ENCODE measurements at regions of chr12 and their contacts with region 1.

Region 1: DNA sequence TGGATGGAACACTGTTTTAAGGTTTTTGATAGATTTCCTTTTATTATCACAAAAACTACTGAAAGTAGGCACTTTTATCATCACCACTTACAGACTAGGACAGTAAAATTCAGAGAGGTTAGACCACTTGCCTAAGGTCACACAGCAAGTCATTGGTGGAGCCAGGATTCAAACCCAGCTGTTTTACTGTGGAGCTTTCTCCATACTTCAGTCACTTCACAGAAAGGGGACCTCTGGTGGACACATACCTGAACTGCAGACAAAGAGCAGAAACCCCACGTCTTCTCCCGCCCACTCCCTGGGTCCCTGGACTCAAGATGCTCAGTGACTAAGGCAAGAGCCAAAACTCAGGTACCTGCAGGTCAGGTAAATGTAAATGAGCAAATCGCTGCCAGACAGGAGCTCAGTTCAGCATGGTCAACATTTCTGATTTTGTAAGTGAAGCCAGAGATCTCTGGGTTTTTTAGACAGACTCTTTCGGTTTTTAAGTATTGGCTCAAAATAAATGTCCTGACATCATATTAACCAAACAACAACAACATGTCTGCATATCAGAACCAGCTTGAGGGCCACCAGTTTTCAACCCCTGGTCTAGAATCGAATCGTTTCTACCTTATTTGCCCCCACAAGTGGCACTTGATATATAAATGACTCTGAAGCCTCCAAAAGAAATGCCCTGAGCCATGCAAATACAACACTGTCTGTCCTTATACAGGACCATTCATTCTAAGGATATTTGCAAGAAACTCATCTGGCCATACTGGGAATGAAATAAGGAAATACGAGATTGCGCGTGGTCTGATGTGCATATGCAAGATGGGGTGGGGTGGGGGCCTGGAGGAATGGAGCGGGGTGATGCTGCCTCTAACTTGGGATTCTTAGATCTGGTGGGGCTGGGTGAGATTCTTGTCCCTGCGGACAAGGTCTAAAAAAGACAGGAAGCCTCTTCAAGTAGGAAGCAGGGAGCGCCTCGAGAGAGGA is 110.9 kb downstream of the KSR2 start:
- DNase-seq: peak; percentile 41
- H3K4me3 ChIP-seq: no peak overlapping the region
- H3K27ac ChIP-seq: no peak overlapping the region
- H3K4me1 ChIP-seq: no peaks in the 10 kb centered on the region
- H3K27me3 ChIP-seq: no peaks in the 10 kb centered on the region
- CTCF ChIP-seq: peak; percentile 42 to 51

Region 2: DNA sequence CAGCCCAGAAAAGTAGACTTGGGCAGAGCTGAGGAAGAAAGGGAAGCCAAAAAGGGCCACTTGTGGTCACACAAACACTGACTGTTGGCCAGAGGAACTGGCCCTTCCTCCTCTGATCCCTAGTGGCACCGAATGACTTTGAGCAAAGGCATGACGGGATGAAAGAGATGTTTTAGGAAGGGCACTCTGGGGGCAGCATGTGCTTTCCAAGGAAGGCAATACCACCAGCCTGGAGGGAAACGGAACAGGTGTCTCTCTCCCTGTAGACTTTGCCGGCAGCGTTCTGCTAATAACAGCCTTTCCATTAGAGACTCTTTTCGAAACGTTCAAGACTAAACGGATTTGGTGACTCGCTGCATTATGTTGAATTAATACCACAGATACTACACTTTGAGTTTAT is 655.4 kb before region 1 on chr12:
- CTCF ChIA-PET with region 1: no interaction called
- dilution Hi-C with region 1: loop called (anchors 10 kb)
- in situ Hi-C with region 1: no loop called
- intact Hi-C with region 1: no loop called
- DNase-seq: no peak
- H3K4me3 ChIP-seq: no peak overlapping the region
- H3K27ac ChIP-seq: no peak overlapping the region
- H3K4me1 ChIP-seq: no peaks in the 10 kb centered on the region
- H3K27me3 ChIP-seq: no peaks in the 10 kb centered on the region
- CTCF ChIP-seq: no peak

Region 3: DNA sequence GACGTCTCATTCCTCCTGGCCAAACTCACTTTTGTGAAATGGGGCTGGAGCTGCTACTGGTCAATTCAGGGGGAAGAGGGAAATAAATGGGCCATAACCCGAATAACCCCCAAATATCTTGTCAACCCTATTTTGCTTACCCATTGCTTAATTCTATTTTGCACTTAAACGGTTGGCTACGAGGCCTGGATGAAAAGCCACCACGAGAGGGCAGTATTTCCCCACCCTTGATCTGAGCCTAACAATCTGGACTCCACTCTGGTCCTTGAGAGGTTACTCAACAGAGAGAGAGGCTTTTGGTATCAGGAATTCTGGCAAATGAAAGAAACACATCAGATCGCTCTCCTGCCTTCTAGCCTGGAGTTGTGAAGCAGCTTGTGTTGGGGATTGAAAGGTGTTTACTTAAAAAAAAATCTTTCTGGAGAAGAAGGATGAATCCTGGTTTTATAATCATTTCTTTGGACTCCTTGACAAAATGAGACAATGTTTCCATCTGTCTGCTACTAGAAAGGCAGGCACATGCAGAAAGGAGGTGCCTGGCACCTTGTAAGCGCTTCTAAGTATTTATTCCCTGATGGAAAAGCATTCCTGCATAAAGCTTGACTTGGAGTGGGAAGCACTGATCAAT is 645.2 kb before region 1 on chr12:
- CTCF ChIA-PET with region 1: no interaction called
- dilution Hi-C with region 1: loop called (anchors 10 kb)
- in situ Hi-C with region 1: no loop called
- intact Hi-C with region 1: loop called (anchors 1 kb)
- DNase-seq: peak; percentile 55
- H3K4me3 ChIP-seq: no peak overlapping the region
- H3K27ac ChIP-seq: no peak overlapping the region
- H3K4me1 ChIP-seq: no peaks in the 10 kb centered on the region
- H3K27me3 ChIP-seq: peaks cover 2% of the 10 kb centered on the region
- CTCF ChIP-seq: peak; percentile 85 to 88

Region 4: DNA sequence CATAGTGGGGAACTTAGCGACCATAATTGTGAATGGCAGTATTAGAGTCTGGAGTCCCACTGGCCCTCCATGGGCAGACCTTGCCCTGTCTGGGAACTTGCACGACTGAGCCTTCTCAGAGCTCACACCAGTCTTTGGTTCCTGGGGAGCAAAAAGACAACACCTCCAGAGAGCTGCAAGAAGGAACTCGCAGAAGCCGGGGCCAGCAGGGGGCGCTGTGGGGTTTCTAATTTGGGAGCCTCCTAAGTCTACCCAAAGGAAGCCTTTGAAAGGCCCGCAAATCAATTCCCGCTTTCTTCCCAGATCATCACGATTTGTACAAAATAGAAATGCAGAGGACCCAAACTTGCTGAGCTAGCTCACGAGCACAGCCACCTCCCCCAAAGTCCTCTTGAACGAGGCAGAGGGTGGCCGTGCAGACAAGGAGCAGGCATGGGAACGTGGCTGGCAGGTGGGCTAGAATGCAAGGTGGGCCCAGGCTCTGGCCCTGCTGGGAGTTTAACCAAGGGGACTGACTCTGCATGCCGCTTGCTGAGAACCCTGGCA is 621.4 kb before region 1 on chr12:
- CTCF ChIA-PET with region 1: no interaction called
- dilution Hi-C with region 1: loop called (anchors 10 kb)
- in situ Hi-C with region 1: no loop called
- intact Hi-C with region 1: no loop called
- DNase-seq: peak; percentile 19
- H3K4me3 ChIP-seq: no peak overlapping the region
- H3K27ac ChIP-seq: no peak overlapping the region
- H3K4me1 ChIP-seq: no peaks in the 10 kb centered on the region
- H3K27me3 ChIP-seq: no peaks in the 10 kb centered on the region
- CTCF ChIP-seq: peak; percentile 46 to 57

Region 5: DNA sequence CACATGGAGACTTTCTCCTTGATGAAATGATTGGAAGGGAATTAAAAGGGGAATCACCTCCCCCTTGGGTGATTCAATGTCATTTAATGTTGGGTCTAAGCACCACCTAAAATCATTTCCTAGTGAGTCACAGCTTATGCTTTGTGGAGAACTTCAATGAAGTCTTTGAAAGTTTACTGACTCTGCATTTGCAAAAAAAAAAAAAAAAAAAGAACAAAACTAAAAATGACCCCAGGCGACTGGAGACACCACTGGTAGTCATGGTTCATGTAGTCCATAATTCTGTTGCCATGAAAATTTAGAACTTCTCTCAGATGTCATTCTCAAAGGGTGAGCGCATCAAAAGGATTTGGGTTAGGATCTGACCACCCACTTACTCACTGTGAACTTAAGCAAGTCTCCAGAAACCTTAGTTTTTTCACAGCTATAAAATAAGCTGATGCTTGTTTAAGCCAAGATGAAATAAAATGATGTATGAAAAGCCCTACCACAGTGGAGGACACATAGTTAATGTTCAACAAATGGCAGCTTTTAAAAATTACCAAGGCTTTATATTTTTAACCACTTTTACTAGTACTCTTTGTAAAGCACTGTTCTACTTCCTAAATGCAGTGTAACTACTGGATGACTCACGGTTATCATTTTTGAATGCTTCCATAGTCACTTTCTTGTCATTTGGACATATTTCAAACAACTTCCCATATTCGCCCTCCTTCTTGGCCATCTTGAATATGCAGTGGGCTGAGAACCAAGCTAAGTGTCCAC is 129.0 kb after region 1 on chr12:
- CTCF ChIA-PET with region 1: interaction called, 19 read pairs
- dilution Hi-C with region 1: no loop called
- in situ Hi-C with region 1: no loop called
- intact Hi-C with region 1: no loop called
- DNase-seq: peak; percentile 90
- H3K4me3 ChIP-seq: no peak overlapping the region
- H3K27ac ChIP-seq: peak overlapping the region; percentile 82
- H3K4me1 ChIP-seq: peaks cover 18% of the 10 kb centered on the region
- H3K27me3 ChIP-seq: no peaks in the 10 kb centered on the region
- CTCF ChIP-seq: no peak